ENCODE measurements at regions of chr2 and their contacts with region 1.

Region 1: GRCh38 chr2:28392297-28393113 is at the start of gene FOSL2:
- DNase-seq: peak; percentile 92 to 98
- ATAC-seq: peak; percentile 68 to 89 (median 73)
- H3K4me3 ChIP-seq: peak within 1 kb of the TSS; percentile 89
- H3K4me3 Mint-ChIP-seq: peak within 1 kb of the TSS; percentile 89
- H3K27ac ChIP-seq: peak within 1 kb of the TSS; percentile 97
- H3K27ac Mint-ChIP-seq: no peak within 1 kb of the TSS
- H3K4me1 ChIP-seq: peaks cover 36% of the 10 kb centered on the region
- H3K4me1 Mint-ChIP-seq: peaks cover 24 to 33% of the 10 kb centered on the region in 2 donors
- H3K27me3 ChIP-seq: no peaks in the 10 kb centered on the region
- H3K27me3 Mint-ChIP-seq: peaks cover 0 to 3% of the 10 kb centered on the region in 2 donors
- CTCF ChIP-seq: no peak
- total RNA-seq, gene FOSL2: 414 to 531 (median 455) TPM

Region 2: DNA sequence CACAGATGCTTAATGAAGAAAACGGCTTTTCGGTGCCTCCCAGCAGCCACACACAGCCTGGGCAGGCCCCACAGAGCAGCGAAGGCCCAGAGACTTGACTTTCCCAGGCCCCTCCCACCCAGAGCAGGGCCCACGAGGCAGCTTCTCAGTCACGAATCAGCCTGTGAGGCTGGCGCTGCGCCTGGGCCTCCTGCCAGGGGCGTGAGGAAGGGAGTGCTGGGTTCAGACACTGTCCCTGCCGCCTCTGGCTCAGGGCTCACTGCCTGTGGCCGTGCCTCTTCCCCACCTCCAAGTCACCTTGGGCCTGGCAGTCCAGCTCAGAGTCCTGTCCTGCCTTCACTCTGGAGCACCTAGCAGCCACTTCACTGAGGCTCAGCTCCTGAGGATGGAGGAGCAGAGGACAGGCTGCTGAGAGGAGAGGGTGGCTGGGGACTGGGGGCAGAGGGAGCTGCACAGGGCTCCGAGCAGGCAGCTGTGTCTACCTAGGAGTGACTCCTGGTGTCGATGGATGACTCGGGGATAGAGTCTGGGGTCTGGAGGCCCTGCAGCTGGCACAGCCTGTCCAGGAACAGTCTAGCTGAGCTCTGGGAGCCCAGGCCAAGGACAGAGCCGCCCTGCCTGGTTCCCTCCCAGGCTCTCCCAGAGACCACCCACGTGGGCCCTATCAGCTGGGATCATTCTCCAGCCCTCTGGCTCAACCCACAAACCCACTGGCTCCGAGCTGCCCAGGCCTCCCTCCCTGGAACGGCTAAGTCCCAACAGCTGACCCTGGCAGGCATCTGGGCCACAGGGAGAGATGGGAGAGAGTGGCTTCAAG is 36.2 kb before region 1 on chr2:
- intact Hi-C with region 1: loop called (anchors 1 kb)
- DNase-seq: peak in 1 of 2 donors; percentile 73
- ATAC-seq: peak in 1 of 3 donors; percentile 14
- H3K4me3 ChIP-seq: no peak overlapping the region
- H3K4me3 Mint-ChIP-seq: no peak overlapping the region
- H3K27ac ChIP-seq: peak overlapping the region; percentile 29
- H3K27ac Mint-ChIP-seq: peak overlapping the region; percentile 63 to 80
- H3K4me1 ChIP-seq: peaks cover 59% of the 10 kb centered on the region
- H3K4me1 Mint-ChIP-seq: peaks cover 24 to 55% of the 10 kb centered on the region in 2 donors
- H3K27me3 ChIP-seq: no peaks in the 10 kb centered on the region
- H3K27me3 Mint-ChIP-seq: no peaks in the 10 kb centered on the region
- CTCF ChIP-seq: no peak

Region 3: DNA sequence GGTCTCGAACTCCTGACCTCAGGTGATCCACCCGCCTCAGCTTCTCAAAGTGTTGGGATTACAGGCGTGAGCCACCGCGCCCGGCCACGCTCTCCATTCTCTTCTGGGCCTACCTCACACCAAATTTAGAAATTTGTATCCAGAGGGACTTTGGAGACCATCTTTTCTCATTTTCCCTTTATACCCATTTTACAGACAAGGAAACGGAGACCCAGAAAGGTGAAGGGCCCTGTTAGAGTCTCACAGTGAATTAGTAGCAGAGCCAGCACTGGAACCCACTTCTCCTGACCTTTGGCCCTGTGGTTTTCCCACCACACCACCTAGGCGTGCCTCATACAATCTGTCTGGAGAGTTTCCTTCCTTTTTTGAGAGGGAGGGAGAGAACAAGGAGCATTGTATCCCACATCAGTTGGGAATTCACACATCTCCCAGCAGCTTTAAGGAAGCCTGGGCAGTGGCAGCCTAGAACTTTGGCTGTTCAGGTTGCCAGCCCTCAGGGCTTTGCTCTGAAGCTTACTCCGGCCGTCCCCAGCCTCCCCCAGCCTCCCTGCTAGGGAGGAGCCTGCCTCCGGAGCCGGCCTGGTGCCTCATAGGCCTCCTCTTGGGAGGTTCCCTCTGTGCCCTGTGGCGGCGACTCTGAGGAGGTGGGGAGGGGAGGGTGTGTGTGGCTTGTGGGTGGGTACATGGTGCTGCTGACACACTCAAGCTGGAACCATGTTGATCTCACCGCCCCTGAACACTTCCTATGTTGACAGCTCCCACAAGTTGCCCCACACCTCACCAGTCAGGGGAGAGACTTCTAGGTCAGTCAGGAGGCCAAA is 14.0 kb after region 1 on chr2:
- intact Hi-C with region 1: loop called (anchors 1 kb)
- DNase-seq: peak; percentile 84 to 87
- ATAC-seq: peak; percentile 61 to 85 (median 64)
- H3K4me3 ChIP-seq: no peak overlapping the region
- H3K4me3 Mint-ChIP-seq: peak overlapping the region; percentile 84
- H3K27ac ChIP-seq: peak overlapping the region; percentile 96
- H3K27ac Mint-ChIP-seq: peak overlapping the region; percentile 96 to 100
- H3K4me1 ChIP-seq: peaks cover 98% of the 10 kb centered on the region
- H3K4me1 Mint-ChIP-seq: peaks cover 60 to 64% of the 10 kb centered on the region in 2 donors
- H3K27me3 ChIP-seq: no peaks in the 10 kb centered on the region
- H3K27me3 Mint-ChIP-seq: no peaks in the 10 kb centered on the region
- CTCF ChIP-seq: peak; percentile 24

Region 4: DNA sequence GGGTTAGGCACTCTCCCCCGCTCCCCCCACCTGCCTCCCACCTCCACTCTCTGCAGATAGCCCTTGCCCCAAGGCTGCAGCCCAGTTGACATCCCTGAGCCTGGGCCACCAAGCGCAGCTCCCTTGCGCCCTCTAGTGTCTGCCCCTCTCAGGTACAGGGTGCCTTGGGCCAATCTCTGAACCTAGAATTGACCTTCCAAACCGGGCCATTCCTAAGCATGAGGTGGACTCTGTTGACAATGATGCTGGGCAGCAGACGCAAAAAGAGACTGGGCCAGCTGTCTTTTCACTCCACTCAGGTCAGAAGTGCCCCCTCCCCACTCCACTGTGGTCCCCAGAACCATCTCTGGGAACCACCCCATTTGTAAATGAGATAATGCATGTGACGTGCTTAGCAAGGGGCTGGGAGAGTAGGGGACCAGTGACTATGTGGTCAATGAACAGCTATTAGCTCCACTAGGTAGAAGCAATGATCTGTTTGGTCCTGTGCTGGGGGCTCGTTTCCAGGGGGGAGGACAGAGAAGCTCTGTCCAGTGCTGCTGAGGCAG is 60.1 kb after region 1 on chr2:
- intact Hi-C with region 1: loop called (anchors 5 kb)
- DNase-seq: peak; percentile 80 to 86
- ATAC-seq: peak; percentile 85 to 98 (median 96)
- H3K4me3 ChIP-seq: no peak overlapping the region
- H3K4me3 Mint-ChIP-seq: no peak overlapping the region
- H3K27ac ChIP-seq: no peak overlapping the region
- H3K27ac Mint-ChIP-seq: peak overlapping the region in 1 of 2 donors; percentile 45
- H3K4me1 ChIP-seq: peaks cover 26% of the 10 kb centered on the region
- H3K4me1 Mint-ChIP-seq: peaks cover 14 to 30% of the 10 kb centered on the region in 2 donors
- H3K27me3 ChIP-seq: no peaks in the 10 kb centered on the region
- H3K27me3 Mint-ChIP-seq: peaks cover 0 to under 1% of the 10 kb centered on the region in 2 donors
- CTCF ChIP-seq: peak; percentile 92